Naive thymus-derived CD8-positive, alpha-beta T cell (primary cell): ENCODE measurements at regions of chr15 and their contacts with region 1.

Region 1: GRCh38 chr15:67101911-67102598 is 36.7 kb downstream of the SMAD3 start:
- DNase-seq: peak in 1 of 10 donors; percentile 48
- ATAC-seq: peak; percentile 22 to 56
- H3K4me3 Mint-ChIP-seq: no peak overlapping the region
- H3K27ac Mint-ChIP-seq: no peak overlapping the region
- H3K4me1 Mint-ChIP-seq: peaks cover 27 to 39% (median 30%) of the 10 kb centered on the region in 4 donors
- H3K27me3 Mint-ChIP-seq: no peaks in the 10 kb centered on the region

Region 2: DNA sequence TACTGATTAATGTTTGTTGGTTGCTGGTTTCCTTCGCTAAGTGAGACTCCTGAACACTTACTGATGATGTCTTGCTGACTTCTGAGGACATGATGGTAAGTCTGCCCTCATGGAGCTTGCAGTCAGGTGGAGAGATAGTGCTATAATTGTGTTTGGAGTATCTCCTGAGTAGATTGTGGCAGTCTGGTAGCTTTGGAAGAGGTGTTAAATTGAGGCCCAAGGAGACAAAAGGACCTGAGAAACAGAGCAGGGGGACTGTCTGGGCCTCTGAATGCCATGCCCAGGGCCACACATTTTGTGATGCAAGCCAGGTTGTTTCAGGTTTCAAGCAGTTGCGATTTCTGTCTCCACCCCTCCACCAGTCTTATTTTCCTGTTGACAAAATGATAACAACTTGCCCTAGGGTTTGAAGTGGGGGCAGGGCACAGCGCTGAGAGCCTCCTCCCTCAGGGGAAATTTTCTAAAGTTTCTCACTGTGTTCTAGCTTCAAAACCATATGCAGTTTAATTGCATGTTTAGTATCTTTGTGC is 20.0 kb before region 1 on chr15:
- POLR2A ChIA-PET with region 1: interaction called, 13 read pairs
- DNase-seq: peak in 2 of 10 donors; percentile 34 to 39
- ATAC-seq: peak; percentile 50 to 64
- H3K4me3 Mint-ChIP-seq: peak overlapping the region in 7 of 10 donors; percentile 2 to 73 (median 37)
- H3K27ac Mint-ChIP-seq: peak overlapping the region in 4 of 10 donors; percentile 7 to 87 (median 50)
- H3K4me1 Mint-ChIP-seq: peaks cover 34 to 98% (median 70%) of the 10 kb centered on the region in 4 donors
- H3K27me3 Mint-ChIP-seq: peaks cover 0 to 11% (median 0%) of the 10 kb centered on the region in 5 donors